Right ventricle myocardium inferior (tissue), 1 donor: ENCODE measurements at regions of chr21 and their contacts with region 1.

Region 1: GRCh38 chr21:38219049-38219628 is 37.7 kb upstream of the KCNJ15 start:
- DNase-seq: peak; percentile 89
- ATAC-seq: peak; percentile 76

Region 2: GRCh38 chr21:38159355-38159754 is 59.8 kb before region 1 on chr21:
- intact Hi-C with region 1: loop called (anchors 10 kb)
- DNase-seq: no peak
- ATAC-seq: no peak

Region 3: DNA sequence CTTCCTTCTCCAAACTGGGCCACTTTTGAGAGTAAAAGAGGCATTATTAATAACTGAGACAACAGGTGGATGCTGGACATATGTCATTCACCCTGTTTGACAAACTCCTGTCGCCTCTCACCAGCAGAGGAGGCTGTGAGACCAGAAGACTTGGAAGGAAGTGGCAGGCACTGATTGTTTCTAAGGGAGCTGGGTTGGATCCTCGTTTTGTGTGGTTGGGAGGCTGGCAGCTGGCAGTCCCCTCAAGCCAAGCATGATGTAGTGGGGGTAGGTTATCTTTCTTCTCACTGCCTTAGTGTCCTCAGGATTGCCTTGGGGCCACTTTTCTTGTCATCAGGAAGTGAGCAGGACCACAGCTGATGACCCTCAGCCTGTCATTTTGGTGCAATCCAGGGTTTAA is 48.9 kb before region 1 on chr21:
- intact Hi-C with region 1: loop called (anchors 5 kb)
- DNase-seq: no peak
- ATAC-seq: no peak